CD4-positive, alpha-beta memory T cell (primary cell): ENCODE measurements at regions of chrX and their contacts with region 1.

Region 1: GRCh38 chrX:24054182-24055042 is at the start of gene EIF2S3:
- DNase-seq: peak; percentile 90 to 96 (median 94)
- H3K4me3 ChIP-seq: peak within 1 kb of the TSS; percentile 76 to 79
- H3K4me3 Mint-ChIP-seq: peak within 1 kb of the TSS in 3 of 8 donors; percentile 97 to 100 (median 98)
- H3K27ac ChIP-seq: no peak within 1 kb of the TSS
- H3K27ac Mint-ChIP-seq: peak within 1 kb of the TSS in 1 of 7 donors; percentile 99
- H3K4me1 ChIP-seq: peaks cover 5% of the 10 kb centered on the region
- H3K4me1 Mint-ChIP-seq: peaks cover 0 to 4% (median 1%) of the 10 kb centered on the region in 4 donors
- H3K27me3 ChIP-seq: no peaks in the 10 kb centered on the region
- H3K27me3 Mint-ChIP-seq: no peaks in the 10 kb centered on the region
- total RNA-seq, gene EIF2S3: 218 to 221 TPM

Region 2: GRCh38 chrX:23667239-23668177 is 386.9 kb before region 1 on chrX and contains the start of gene PRDX4:
- CTCF ChIA-PET with region 1: interaction called, 3 read pairs
- POLR2A ChIA-PET with region 1: interaction called, 10 read pairs
- intact Hi-C with region 1: loop called (anchors 1 kb)
- DNase-seq: peak; percentile 60 to 75 (median 67)
- H3K4me3 ChIP-seq: peak within 1 kb of the TSS in 1 of 2 donors; percentile 52
- H3K4me3 Mint-ChIP-seq: peak within 1 kb of the TSS; percentile 86 to 94 (median 88)
- H3K27ac ChIP-seq: peak within 1 kb of the TSS; percentile 85
- H3K27ac Mint-ChIP-seq: peak within 1 kb of the TSS; percentile 85 to 94 (median 91)
- H3K4me1 ChIP-seq: peaks cover 17% of the 10 kb centered on the region
- H3K4me1 Mint-ChIP-seq: peaks cover 14 to 29% (median 17%) of the 10 kb centered on the region in 4 donors
- H3K27me3 ChIP-seq: no peaks in the 10 kb centered on the region
- H3K27me3 Mint-ChIP-seq: no peaks in the 10 kb centered on the region
- total RNA-seq, gene PRDX4: 13.1 to 13.4 TPM

Region 3: GRCh38 chrX:23756157-23756559 is 298.3 kb before region 1 on chrX:
- CTCF ChIA-PET with region 1: no interaction called
- POLR2A ChIA-PET with region 1: no interaction called
- intact Hi-C with region 1: loop called (anchors 1 kb)
- DNase-seq: peak; percentile 53 to 64 (median 56)
- H3K4me3 ChIP-seq: no peak overlapping the region
- H3K4me3 Mint-ChIP-seq: peak overlapping the region in 3 of 8 donors; percentile 22 to 57 (median 31)
- H3K27ac ChIP-seq: no peak overlapping the region
- H3K27ac Mint-ChIP-seq: peak overlapping the region in 3 of 7 donors; percentile 30 to 71 (median 42)
- H3K4me1 ChIP-seq: no peaks in the 10 kb centered on the region
- H3K4me1 Mint-ChIP-seq: peaks cover 0 to 4% (median 3%) of the 10 kb centered on the region in 4 donors
- H3K27me3 ChIP-seq: no peaks in the 10 kb centered on the region
- H3K27me3 Mint-ChIP-seq: no peaks in the 10 kb centered on the region

Region 4: GRCh38 chrX:23901805-23902204 is 152.6 kb before region 1 on chrX:
- CTCF ChIA-PET with region 1: interaction called, 53 read pairs
- POLR2A ChIA-PET with region 1: interaction called, 44 read pairs
- intact Hi-C with region 1: no loop called
- DNase-seq: peak in 4 of 5 donors; percentile 26 to 51 (median 44)
- H3K4me3 ChIP-seq: no peak overlapping the region
- H3K4me3 Mint-ChIP-seq: no peak overlapping the region
- H3K27ac ChIP-seq: no peak overlapping the region
- H3K27ac Mint-ChIP-seq: no peak overlapping the region
- H3K4me1 ChIP-seq: peaks cover 21% of the 10 kb centered on the region
- H3K4me1 Mint-ChIP-seq: peaks cover 2 to 9% (median 5%) of the 10 kb centered on the region in 4 donors
- H3K27me3 ChIP-seq: no peaks in the 10 kb centered on the region
- H3K27me3 Mint-ChIP-seq: no peaks in the 10 kb centered on the region

Region 5: GRCh38 chrX:23952984-23953907 is 101.2 kb before region 1 on chrX:
- CTCF ChIA-PET with region 1: interaction called, 9 read pairs
- POLR2A ChIA-PET with region 1: interaction called, 13 read pairs
- intact Hi-C with region 1: no loop called
- DNase-seq: peak; percentile 42 to 59 (median 52)
- H3K4me3 ChIP-seq: peak overlapping the region in 1 of 2 donors; percentile 50
- H3K4me3 Mint-ChIP-seq: peak overlapping the region; percentile 72 to 88 (median 85)
- H3K27ac ChIP-seq: peak overlapping the region; percentile 64
- H3K27ac Mint-ChIP-seq: peak overlapping the region; percentile 61 to 93 (median 88)
- H3K4me1 ChIP-seq: peaks cover 20% of the 10 kb centered on the region
- H3K4me1 Mint-ChIP-seq: peaks cover 3 to 34% (median 9%) of the 10 kb centered on the region in 4 donors
- H3K27me3 ChIP-seq: no peaks in the 10 kb centered on the region
- H3K27me3 Mint-ChIP-seq: no peaks in the 10 kb centered on the region

Region 6: DNA sequence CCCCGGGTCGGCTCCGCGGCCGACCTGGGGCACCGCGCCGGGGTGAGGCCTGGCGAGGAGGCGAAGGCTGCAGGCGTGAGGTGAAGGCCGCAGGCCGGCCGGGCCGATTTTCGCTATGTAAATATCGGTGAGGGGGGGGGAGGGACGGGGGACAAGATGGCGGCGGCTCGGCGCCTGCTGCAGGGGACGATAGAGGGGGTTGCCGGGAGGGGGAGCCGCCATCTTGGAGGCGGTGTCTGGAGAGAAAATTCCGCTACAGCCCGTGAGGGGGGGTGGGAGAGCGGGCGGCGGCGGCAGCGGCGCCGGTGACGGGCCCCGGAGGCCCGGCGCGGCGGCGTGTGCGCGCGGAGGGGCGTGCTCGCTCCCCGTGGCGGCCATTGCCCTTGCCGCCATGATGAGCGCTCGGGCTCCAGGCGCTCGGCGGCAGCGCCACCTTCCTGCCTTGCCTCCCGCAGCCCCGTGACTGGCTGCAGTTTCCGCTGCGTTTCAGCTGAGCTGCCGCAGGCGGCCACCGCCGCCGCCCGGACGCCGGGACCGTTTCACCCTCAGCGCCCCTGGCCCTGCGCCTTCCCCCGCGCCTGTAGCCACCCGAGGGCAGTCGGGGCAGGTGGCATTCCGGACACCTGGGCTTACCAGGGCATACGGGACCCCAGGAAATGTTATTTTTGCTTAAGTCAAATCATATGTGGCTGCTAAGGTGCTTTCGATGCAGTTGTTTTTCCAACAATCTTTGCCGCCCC is 95.8 kb after region 1 on chrX:
- CTCF ChIA-PET with region 1: interaction called, 6 read pairs
- POLR2A ChIA-PET with region 1: interaction called, 16 read pairs
- intact Hi-C with region 1: loop called (anchors 1 kb)
- DNase-seq: peak; percentile 89 to 95 (median 93)
- H3K4me3 ChIP-seq: peak overlapping the region; percentile 64 to 65
- H3K4me3 Mint-ChIP-seq: peak overlapping the region; percentile 88 to 95 (median 92)
- H3K27ac ChIP-seq: peak overlapping the region; percentile 83
- H3K27ac Mint-ChIP-seq: peak overlapping the region; percentile 91 to 96 (median 94)
- H3K4me1 ChIP-seq: peaks cover 78% of the 10 kb centered on the region
- H3K4me1 Mint-ChIP-seq: peaks cover 39 to 77% (median 61%) of the 10 kb centered on the region in 4 donors
- H3K27me3 ChIP-seq: no peaks in the 10 kb centered on the region
- H3K27me3 Mint-ChIP-seq: no peaks in the 10 kb centered on the region

Region 7: DNA sequence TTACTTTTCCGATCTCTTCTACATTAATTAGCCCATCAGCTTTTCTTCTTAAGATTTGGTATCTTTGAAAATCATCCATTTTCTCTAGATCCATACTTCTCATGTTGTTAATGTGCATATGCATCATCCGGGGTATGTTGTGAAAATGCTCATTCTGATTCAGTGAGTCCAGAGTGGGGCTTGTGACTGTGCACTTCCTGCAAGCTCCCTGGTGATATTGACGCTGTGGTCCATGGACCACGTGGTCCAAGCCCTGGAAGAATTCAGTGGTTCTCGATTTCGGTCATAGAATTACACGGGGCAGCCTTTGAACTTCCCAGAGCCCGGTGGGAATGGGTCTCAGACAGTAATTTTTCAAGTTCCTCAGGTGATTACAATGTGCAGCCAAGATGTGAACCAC is 164.9 kb after region 1 on chrX:
- CTCF ChIA-PET with region 1: no interaction called
- POLR2A ChIA-PET with region 1: no interaction called
- intact Hi-C with region 1: no loop called
- DNase-seq: no peak
- H3K4me3 ChIP-seq: no peak overlapping the region
- H3K4me3 Mint-ChIP-seq: no peak overlapping the region
- H3K27ac ChIP-seq: no peak overlapping the region
- H3K27ac Mint-ChIP-seq: no peak overlapping the region
- H3K4me1 ChIP-seq: no peaks in the 10 kb centered on the region
- H3K4me1 Mint-ChIP-seq: peaks cover 0 to 5% (median under 1%) of the 10 kb centered on the region in 4 donors
- H3K27me3 ChIP-seq: no peaks in the 10 kb centered on the region
- H3K27me3 Mint-ChIP-seq: no peaks in the 10 kb centered on the region